WTC11 (cell line): ENCODE measurements at regions of chr10 and their contacts with region 1.

Region 1: DNA sequence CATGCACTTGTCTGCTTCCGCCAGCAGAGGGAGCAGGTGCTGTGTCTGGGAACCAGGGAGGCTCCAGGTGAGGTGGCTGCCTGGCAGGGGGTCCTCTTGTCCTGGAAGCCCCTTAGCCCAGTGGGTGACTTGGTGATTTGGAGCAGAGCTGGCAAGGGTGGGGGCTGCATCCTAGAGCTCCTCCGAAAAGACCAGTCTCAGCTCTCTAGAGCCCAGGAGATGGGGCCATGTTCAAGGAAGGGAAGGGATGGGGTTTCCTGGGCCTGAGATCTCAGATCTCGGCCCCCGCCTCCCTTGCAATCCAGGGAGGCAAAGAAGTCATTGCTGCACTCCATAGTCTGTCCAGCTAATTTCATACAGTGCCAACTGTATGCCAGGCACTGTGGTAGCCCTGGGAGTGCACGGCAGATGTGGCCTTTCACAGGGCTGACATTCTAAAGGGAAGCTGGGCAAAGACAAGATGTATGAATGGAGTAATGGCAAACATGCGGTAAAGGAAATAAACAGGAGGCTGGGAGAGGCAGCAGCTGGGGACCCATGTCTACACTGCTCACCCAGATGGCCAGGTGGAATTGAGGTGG is 20.4 kb upstream of the SFRP5 start:
- DNase-seq: peak; percentile 94
- ATAC-seq: no peak
- H3K4me3 Mint-ChIP-seq: no peak overlapping the region
- H3K27ac Mint-ChIP-seq: no peak overlapping the region
- H3K4me1 Mint-ChIP-seq: peaks cover 8% of the 10 kb centered on the region; the same call in 1 of the 2 replicates
- H3K27me3 Mint-ChIP-seq: no peaks in the 10 kb centered on the region
- CTCF ChIP-seq: peak; percentile 91

Region 2: DNA sequence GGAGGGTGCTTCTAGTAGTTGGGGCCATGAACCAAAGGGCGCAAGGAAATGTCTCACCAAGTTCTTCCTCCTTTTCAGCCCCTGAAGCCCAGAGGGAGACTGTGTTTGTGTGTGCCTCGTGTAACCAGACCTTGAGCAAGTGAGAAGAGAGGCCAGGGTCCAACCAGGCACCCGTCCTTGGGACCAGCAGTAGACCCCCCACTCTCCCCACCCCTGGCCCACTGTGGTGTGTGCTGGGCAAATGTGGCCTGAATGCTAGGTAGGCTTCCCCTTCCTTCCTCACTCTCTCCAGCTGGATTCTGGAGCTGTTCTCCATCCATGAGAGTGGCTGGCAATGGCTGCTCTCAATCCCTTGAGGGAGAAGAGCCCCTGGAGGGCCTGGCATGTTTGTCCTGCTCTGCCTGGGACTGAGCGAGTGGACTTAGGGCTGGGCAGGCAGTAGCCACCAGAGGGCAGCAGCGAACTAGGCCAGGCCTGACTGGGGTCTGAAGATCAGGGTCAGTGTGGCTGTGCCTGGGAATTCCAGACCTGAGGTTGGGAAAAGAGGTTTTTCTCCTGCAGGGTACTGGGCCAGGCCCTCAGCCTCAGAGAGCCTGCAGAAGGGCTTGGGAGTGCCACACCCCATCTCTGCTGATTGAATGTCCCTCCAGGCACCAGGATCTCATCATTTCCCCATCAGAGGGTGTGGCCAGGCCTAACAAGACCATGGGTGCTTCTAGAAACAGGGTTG is 32.9 kb before region 1 on chr10:
- CTCF ChIA-PET with region 1: interaction called, 11 read pairs
- POLR2A ChIA-PET with region 1: no interaction called
- DNase-seq: peak; percentile 90
- ATAC-seq: peak; percentile 90
- H3K4me3 Mint-ChIP-seq: no peak overlapping the region
- H3K27ac Mint-ChIP-seq: peak overlapping the region; percentile 53; the same call in 1 of the 2 replicates
- H3K4me1 Mint-ChIP-seq: peaks cover 14% of the 10 kb centered on the region
- H3K27me3 Mint-ChIP-seq: no peaks in the 10 kb centered on the region
- CTCF ChIP-seq: peak; percentile 76

Region 3: DNA sequence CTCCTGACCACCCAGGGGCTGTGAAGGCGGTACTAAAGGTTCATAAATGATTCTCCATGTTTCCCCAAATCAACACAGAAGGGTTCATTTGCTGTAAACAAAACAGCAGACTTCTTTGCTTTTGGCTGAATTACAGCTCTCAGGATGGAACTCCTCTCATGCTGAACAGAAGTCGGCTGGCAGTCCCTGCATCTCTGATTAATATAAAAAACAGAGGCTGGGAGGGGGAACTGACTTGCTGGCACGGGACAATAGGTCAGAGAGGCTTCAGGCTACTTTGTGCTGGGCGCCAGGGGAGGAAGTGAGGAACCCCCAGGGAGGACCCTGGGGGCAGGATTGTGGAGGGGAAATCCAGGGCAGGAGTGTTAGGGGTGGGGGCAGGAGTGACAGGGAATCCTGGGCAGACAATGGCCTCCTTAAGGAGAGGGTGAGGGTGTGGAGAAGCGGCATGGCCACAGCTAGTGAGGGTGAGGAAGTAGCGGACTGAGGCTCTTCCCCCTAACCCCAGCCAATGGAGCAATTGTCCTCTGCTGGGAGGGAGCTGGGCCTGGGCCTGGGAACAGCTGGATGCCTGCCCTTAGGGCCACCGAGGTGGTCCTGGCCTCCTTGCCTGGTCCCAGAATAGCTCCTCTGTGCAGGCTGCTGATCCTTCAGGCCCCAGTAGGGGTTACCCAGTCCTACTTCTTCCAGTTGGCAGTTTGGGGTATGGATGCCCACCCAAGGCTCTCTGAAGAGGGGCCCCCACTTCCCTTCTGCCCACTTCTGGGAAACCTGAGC is 11.2 kb before region 1 on chr10:
- CTCF ChIA-PET with region 1: interaction called, 24 read pairs
- POLR2A ChIA-PET with region 1: no interaction called
- DNase-seq: no peak
- ATAC-seq: no peak
- H3K4me3 Mint-ChIP-seq: no peak overlapping the region
- H3K27ac Mint-ChIP-seq: 0 out of 2 replicates have a peak overlapping the region, but pooled peaks have one; percentile 11
- H3K4me1 Mint-ChIP-seq: peaks cover 22% of the 10 kb centered on the region
- H3K27me3 Mint-ChIP-seq: no peaks in the 10 kb centered on the region
- CTCF ChIP-seq: no peak

Region 4: DNA sequence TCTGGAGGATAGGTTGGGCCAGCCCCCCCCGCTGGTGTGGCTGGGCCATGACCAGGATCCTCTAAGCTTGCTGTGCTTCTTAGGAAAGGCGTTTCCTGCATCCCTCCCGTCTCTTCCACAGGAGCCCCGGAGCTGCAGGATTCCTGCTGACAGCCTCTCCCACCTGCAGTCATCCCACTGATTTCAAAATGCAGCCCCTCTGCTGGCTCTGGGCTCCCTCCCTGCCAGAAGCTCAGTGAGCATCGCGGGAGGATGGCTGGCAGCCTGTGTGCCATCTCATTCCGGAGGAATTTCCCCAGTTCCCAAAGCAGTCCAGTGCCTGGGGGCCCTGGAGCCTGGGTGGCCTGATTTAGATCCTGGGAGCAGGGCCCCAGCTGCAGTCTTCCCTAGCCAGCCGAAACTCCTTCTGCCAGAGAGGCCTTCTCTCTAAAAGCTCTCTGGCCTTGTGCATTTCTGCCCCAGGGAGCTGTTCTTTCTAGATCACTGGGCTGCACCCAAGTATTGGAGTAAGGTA is 35.6 kb after region 1 on chr10:
- CTCF ChIA-PET with region 1: interaction called, 20 read pairs
- POLR2A ChIA-PET with region 1: no interaction called
- DNase-seq: no peak
- ATAC-seq: no peak
- H3K4me3 Mint-ChIP-seq: no peak overlapping the region
- H3K27ac Mint-ChIP-seq: no peak overlapping the region
- H3K4me1 Mint-ChIP-seq: peaks cover 4% of the 10 kb centered on the region; the same call in 1 of the 2 replicates
- H3K27me3 Mint-ChIP-seq: no peaks in the 10 kb centered on the region; the same call in 1 of the 2 replicates
- CTCF ChIP-seq: no peak

Region 5: DNA sequence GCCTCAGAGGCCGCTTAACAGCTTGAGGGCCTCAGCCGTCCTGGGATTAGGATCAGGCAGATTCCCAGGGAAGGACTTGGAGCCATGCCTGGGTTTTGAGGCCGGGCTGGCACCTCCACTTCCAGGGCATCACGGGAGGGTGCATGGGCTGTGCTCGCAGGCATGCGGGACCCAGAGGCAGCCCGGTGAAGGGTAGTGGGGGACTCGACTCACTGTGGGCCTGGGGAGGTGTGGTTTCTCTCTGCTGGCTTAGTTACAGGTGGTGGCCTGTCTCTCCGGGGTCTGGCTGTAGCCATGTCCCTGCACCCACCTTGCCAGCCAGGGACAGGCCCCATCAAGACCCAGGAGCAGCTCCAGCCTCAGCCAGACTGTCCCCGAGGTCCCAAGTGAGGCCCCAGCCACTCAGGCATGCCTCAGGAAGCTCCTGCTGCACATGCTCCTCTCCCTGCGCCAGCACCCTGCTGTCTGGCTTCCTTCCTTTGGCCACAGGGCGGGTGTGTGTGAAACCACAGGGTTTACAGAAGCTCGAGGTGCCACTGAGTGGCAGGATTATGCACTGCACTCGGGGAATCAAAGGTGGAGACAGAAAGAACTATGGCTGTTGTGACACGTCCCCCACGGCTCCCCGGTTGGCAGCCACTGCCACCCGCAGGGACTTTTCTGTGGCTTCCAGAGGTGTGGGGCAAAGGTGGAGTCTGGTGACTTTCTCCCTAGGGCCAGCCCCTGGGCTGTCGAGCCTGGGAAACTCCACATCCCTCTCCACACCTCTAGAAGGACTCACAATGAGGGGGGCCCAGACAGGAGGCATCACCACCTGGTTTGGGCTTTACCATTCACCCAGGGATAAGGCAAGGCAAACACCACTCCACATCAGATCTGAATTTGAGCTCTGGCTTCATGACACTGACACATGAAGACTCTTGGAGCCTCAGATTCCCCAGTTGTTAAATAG is 77.1 kb after region 1 on chr10:
- CTCF ChIA-PET with region 1: interaction called, 57 read pairs
- POLR2A ChIA-PET with region 1: no interaction called
- DNase-seq: peak; percentile 78
- ATAC-seq: peak; percentile 93
- H3K4me3 Mint-ChIP-seq: no peak overlapping the region
- H3K27ac Mint-ChIP-seq: no peak overlapping the region
- H3K4me1 Mint-ChIP-seq: peaks cover 28% of the 10 kb centered on the region
- H3K27me3 Mint-ChIP-seq: no peaks in the 10 kb centered on the region
- CTCF ChIP-seq: 0 out of 2 replicates have a peak, but pooled peaks have one; percentile 12

Region 6: GRCh38 chr10:97888641-97889262 is 96.5 kb after region 1 on chr10:
- CTCF ChIA-PET with region 1: interaction called, 15 read pairs
- POLR2A ChIA-PET with region 1: no interaction called
- DNase-seq: no peak
- ATAC-seq: peak; percentile 54
- H3K4me3 Mint-ChIP-seq: no peak overlapping the region
- H3K27ac Mint-ChIP-seq: no peak overlapping the region
- H3K4me1 Mint-ChIP-seq: peaks cover 35% of the 10 kb centered on the region
- H3K27me3 Mint-ChIP-seq: no peaks in the 10 kb centered on the region; the same call in 1 of the 2 replicates
- CTCF ChIP-seq: no peak

Region 7: GRCh38 chr10:98045785-98046389 is 253.7 kb after region 1 on chr10:
- CTCF ChIA-PET with region 1: interaction called, 16 read pairs
- POLR2A ChIA-PET with region 1: no interaction called
- DNase-seq: peak; percentile 73
- ATAC-seq: peak; percentile 92
- H3K4me3 Mint-ChIP-seq: no peak overlapping the region
- H3K27ac Mint-ChIP-seq: no peak overlapping the region
- H3K4me1 Mint-ChIP-seq: no peaks in the 10 kb centered on the region
- H3K27me3 Mint-ChIP-seq: peaks cover 28% of the 10 kb centered on the region
- CTCF ChIP-seq: peak; percentile 83